ENCODE measurements at regions of chr9 and their contacts with region 1.

Region 1: GRCh38 chr9:91117959-91118703 is 243.6 kb downstream of the AUH start:
- DNase-seq: peak; percentile 86
- ATAC-seq: peak; percentile 98

Region 2: DNA sequence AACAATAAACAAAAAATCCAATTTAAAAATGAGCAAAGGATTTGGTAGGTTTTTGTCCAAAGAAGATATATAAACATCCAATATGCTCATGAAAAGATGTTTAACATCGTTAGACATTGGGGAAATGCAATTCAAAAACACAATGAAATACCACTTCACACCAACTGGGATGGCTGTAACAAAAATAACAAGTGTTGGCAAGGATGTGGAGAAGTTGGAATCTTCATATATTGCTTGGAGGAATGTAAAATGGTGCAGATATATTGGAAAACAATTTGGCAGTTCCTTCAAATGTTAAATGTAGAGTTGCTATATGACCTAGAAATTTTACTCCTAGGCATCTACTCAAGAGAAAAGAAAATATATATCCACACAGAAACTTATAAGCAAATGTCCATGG is 19.3 kb after region 1 on chr9:
- intact Hi-C with region 1: loop called in 1 of 2 experiments (anchors 2 kb)
- DNase-seq: no peak
- ATAC-seq: no peak

Region 3: DNA sequence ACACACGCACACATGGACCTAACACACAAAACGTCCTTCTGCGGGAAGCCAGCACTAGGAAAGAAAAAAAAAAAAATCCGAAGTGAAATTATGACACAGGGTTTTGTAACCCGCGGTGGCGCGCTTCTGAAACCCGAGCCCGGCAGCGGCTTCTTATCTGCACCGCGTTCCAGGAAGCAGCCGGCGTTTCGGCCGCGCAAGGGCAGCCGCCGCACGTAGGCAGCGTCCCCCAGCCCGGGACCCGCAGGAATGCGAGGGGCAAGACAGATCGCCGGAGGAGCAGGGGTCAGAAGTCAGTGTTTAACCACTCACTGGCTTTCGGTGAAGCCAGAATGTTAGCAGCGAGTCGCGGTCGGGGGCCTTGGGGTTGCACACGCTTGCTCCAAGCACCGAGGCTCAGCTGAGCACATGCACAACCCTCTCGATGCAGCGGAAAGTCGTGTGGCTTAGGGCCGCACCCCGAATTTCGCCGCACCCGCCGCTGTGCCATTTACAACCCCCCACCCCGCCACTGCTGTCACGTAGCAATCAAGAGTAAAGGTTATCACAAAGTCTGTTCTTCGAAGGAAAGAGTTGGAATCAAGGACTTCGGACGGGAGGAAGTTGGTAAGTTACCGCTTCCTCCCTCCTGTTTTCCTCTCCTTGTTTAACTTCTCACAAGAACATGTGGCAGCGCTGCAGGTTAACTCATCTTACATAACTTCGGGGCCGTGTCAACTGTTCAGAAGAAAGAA is 75.7 kb after region 1 on chr9:
- intact Hi-C with region 1: loop called in 1 of 2 experiments (anchors 5 kb)
- DNase-seq: peak; percentile 92
- ATAC-seq: peak; percentile 75 to 80

Measured in left cardiac atrium (tissue), 4 donors.